HEK293T (cell line): ENCODE measurements at regions of chr17 and their contacts with region 1.

Region 1: GRCh38 chr17:979538-980405 is at the start of gene NXN:
- DNase-seq: peak; percentile 97

Region 2: DNA sequence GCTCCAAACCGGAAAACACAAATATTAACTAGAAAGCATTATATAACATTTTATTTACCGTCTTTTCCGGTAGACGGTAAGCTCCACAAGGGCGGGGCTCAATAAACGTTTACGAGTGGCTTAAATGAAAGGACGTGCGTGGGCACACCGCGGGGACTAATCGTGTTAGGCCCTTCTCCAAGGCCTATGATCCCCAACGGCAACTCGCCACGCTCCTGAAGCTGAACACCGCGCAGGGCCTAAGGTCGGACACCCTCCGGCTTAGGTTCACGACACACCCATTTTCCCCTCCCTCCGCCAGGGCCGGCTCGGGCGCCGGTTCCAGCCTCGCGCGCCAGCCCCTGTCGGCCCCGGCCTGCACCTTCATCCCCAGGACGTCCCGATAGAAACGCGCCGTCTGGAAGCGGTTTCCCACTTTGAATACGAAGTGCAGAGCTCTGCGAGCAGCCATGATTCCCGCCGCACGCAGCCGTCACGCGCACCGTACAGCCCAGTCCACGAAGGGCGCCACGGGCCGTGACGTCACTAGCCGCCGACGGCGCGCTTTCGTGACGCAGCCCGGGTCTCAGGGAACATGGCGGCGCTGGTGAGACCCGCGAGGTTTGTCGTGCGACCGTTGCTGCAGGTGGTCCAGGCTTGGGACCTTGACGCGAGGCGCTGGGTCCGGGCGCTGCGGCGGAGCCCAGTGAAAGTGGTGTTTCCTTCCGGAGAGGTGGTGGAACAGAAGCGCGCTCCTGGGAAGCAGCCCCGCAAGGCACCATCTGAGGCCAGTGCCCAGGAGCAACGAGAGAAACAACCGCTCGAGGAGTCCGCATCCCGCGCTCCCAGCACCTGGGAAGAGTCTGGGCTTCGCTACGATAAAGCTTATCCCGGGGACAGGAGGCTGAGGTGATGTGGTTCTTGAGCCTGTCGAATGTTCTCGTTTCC is 197.7 kb before region 1 on chr17 and contains the starts of genes GLOD4 and MRM3:
- CTCF ChIA-PET with region 1: no interaction called
- POLR2A ChIA-PET with region 1: interaction called, 16 read pairs
- DNase-seq: peak; percentile 96

Region 3: DNA sequence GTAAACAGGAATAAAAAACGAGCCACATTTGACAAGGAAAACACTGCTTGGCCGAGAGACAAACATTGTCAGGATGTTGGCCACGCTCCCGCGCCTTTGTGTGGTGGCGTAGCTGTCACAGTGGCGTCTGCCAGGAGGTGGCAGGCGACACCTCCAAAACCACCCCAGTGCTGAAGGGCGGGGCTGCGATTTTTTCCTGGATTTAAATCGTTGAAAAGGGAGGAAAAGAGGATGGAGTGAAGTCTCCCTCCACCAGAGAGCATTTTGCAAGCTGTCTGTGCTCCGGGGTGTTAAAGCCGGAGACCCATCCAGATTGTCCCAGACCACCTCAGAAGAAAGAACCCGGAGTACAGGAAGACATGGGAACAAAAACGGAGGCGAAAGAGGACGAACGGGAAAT is 184.9 kb before region 1 on chr17:
- CTCF ChIA-PET with region 1: interaction called, 34 read pairs
- POLR2A ChIA-PET with region 1: interaction called, 8 read pairs
- DNase-seq: peak; percentile 80